ENCODE measurements at regions of chr7 and their contacts with region 1.

Region 1: GRCh38 chr7:108660460-108660859 is 90.8 kb downstream of the DNAJB9 start:
- DNase-seq: peak in 1 of 2 experiments; percentile 17
- H3K4me3 ChIP-seq: no peak overlapping the region
- H3K4me3 Mint-ChIP-seq: no peak overlapping the region
- H3K27ac Mint-ChIP-seq: no peak overlapping the region
- H3K4me1 ChIP-seq: no peaks in the 10 kb centered on the region
- H3K4me1 Mint-ChIP-seq: no peaks in the 10 kb centered on the region
- H3K27me3 ChIP-seq: no peaks in the 10 kb centered on the region
- H3K27me3 Mint-ChIP-seq: no peaks in the 10 kb centered on the region
- CTCF ChIP-seq: peak; percentile 27 to 58

Region 2: GRCh38 chr7:107948645-107949497 is 711.6 kb before region 1 on chr7:
- CTCF ChIA-PET with region 1: no interaction called
- POLR2A ChIA-PET with region 1: no interaction called
- intact Hi-C with region 1: no loop called
- DNase-seq: peak; percentile 49 to 59
- H3K4me3 ChIP-seq: no peak overlapping the region
- H3K4me3 Mint-ChIP-seq: peak overlapping the region; percentile 28
- H3K27ac Mint-ChIP-seq: peak overlapping the region; percentile 56
- H3K4me1 ChIP-seq: peaks cover 57% of the 10 kb centered on the region
- H3K4me1 Mint-ChIP-seq: peaks cover 61% of the 10 kb centered on the region
- H3K27me3 ChIP-seq: no peaks in the 10 kb centered on the region
- H3K27me3 Mint-ChIP-seq: no peaks in the 10 kb centered on the region
- CTCF ChIP-seq: no peak

Region 3: DNA sequence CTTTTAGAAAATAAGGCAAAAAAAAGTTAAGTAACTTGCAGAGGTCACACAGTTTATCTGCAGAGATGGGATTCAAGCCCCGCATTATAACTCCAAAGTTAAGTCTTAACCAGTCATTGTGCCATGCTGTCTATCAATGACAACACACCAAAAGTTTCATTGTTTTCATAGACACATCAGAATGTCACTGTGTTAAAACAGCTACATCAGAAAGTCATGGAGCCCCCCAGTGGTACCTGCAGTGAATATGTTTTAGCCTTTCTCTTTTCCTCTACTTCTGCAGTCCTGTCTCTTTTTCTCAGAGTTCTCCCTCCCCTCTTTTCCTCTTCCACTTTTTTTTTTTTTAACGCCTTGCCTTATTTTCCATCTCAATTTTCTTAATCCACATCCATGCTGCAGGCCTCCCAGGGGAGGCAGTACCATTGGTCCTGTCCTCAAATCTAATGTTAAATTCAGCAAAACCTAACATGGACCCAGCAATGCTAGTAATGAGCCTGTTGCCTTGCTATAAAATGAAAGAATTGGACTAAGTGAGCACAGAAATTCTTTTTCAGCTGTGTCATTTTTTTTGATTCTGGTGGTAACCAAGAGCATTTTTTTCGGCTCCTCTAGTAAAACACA is 200.4 kb before region 1 on chr7:
- CTCF ChIA-PET with region 1: no interaction called
- POLR2A ChIA-PET with region 1: no interaction called
- intact Hi-C with region 1: no loop called
- DNase-seq: peak in 1 of 2 experiments; percentile 68
- H3K4me3 ChIP-seq: no peak overlapping the region
- H3K4me3 Mint-ChIP-seq: no peak overlapping the region
- H3K27ac Mint-ChIP-seq: no peak overlapping the region
- H3K4me1 ChIP-seq: 0 out of 2 replicates have a peak, but pooled peaks cover 3% of the 10 kb centered on the region
- H3K4me1 Mint-ChIP-seq: peaks cover 17% of the 10 kb centered on the region
- H3K27me3 ChIP-seq: no peaks in the 10 kb centered on the region
- H3K27me3 Mint-ChIP-seq: no peaks in the 10 kb centered on the region
- CTCF ChIP-seq: peak; percentile 65 to 69

Region 4: DNA sequence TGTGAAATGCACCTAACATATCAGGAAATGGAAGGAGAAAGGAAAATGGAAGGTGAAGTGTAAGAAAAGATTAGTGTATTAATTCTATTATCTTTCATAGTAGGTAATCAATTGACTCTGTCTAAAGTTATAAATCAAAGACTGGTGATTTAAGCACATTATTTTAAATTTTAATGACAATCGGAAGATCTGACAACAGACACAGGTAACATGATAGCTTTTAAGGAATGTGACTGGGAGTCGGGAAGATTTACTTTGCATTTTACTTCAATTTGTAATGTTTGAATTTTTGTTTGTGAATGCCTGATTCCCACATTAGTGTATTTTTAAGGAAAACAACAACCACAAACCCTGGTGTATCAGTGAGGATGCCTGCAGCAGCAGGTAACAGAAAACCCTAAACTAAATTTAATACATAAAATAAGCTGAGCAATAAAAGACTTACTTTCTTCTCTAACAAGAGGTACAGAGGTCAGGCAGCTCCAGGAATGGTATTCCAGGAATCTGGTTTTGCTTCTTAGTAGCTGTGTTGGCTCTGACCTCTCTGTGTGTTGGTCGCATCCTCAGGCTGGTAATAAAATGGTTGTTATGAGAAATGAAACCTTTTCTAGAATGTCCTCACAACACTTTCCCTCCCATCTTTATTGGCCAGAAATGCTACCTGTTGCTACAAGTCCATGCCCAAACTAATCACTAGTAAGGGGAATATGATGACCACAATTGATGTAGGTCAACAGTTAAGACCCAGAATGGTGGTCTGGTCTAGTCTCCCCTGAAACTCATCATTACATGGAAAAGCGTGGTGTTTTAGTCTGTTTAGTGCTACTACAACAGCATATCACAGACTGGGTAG is 78.6 kb before region 1 on chr7:
- CTCF ChIA-PET with region 1: no interaction called
- POLR2A ChIA-PET with region 1: no interaction called
- intact Hi-C with region 1: no loop called
- DNase-seq: peak; percentile 82 to 89
- H3K4me3 ChIP-seq: no peak overlapping the region
- H3K4me3 Mint-ChIP-seq: peak overlapping the region; percentile 44
- H3K27ac Mint-ChIP-seq: peak overlapping the region; percentile 97
- H3K4me1 ChIP-seq: peaks cover 26% of the 10 kb centered on the region
- H3K4me1 Mint-ChIP-seq: peaks cover 36% of the 10 kb centered on the region
- H3K27me3 ChIP-seq: no peaks in the 10 kb centered on the region
- H3K27me3 Mint-ChIP-seq: no peaks in the 10 kb centered on the region
- CTCF ChIP-seq: no peak

Region 5: DNA sequence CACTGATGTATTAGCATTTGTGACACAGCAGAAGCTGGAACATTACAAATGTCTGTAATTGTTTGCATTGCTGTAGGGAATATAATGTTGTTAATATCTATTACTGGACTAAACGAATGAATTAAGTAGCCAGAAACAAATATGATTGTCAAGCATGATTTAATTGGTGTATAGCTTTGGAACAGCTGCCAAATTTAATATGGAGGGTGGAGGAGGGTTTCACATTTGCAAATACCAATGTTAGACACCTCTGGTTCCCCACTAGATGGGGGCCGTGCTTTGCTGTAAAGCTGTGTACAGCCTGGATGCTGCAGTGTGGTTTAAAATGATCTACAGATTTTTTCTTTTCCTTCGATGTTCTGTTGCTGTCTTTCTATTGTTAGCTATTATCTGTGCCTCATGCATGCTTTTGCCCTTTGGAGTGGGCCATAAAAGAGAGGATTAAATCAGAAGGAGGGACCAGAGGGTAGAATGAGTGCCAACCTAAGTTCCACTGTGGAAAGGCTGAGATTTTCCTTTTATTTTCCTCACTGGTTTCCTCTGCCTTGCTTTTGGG is 67.7 kb before region 1 on chr7:
- CTCF ChIA-PET with region 1: interaction called, 5 read pairs
- POLR2A ChIA-PET with region 1: no interaction called
- intact Hi-C with region 1: loop called (anchors 2 kb)
- DNase-seq: peak; percentile 61 to 69
- H3K4me3 ChIP-seq: no peak overlapping the region
- H3K4me3 Mint-ChIP-seq: no peak overlapping the region
- H3K27ac Mint-ChIP-seq: no peak overlapping the region
- H3K4me1 ChIP-seq: peaks cover 20% of the 10 kb centered on the region
- H3K4me1 Mint-ChIP-seq: peaks cover 19% of the 10 kb centered on the region
- H3K27me3 ChIP-seq: no peaks in the 10 kb centered on the region
- H3K27me3 Mint-ChIP-seq: no peaks in the 10 kb centered on the region
- CTCF ChIP-seq: peak; percentile 45 to 71

Region 6: DNA sequence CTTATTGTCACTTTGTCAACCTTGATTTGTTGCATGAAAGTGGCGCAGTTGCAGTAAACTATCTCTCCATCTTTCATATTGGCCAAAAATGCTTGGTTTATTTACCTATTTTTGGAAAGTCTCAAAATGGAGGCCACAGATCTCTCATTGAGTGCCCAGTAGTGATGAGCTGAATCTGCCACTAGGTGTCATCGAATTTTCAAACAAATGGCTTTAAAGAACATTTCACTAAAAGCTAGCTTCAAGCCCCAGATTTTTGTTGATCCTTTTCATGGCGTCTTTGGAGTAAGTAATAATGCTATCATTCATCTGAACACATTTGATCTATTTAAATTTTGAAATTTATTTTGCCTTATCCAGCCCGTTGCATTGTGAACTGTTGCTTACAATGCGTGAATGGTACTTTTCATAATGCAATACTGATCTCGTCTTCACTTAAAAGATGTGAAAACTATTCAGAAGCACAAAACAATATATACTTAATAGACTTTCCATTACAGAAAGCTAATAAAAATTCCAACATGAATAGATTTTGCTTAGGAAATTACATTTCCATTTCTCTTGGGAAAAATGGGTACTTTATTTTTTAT is 145.4 kb after region 1 on chr7:
- CTCF ChIA-PET with region 1: interaction called, 5 read pairs
- POLR2A ChIA-PET with region 1: no interaction called
- intact Hi-C with region 1: loop called (anchors 5 kb)
- DNase-seq: peak in 1 of 2 experiments; percentile 20
- H3K4me3 ChIP-seq: no peak overlapping the region
- H3K4me3 Mint-ChIP-seq: no peak overlapping the region
- H3K27ac Mint-ChIP-seq: no peak overlapping the region
- H3K4me1 ChIP-seq: no peaks in the 10 kb centered on the region
- H3K4me1 Mint-ChIP-seq: no peaks in the 10 kb centered on the region
- H3K27me3 ChIP-seq: no peaks in the 10 kb centered on the region
- H3K27me3 Mint-ChIP-seq: no peaks in the 10 kb centered on the region
- CTCF ChIP-seq: peak; percentile 50 to 63

Region 7: DNA sequence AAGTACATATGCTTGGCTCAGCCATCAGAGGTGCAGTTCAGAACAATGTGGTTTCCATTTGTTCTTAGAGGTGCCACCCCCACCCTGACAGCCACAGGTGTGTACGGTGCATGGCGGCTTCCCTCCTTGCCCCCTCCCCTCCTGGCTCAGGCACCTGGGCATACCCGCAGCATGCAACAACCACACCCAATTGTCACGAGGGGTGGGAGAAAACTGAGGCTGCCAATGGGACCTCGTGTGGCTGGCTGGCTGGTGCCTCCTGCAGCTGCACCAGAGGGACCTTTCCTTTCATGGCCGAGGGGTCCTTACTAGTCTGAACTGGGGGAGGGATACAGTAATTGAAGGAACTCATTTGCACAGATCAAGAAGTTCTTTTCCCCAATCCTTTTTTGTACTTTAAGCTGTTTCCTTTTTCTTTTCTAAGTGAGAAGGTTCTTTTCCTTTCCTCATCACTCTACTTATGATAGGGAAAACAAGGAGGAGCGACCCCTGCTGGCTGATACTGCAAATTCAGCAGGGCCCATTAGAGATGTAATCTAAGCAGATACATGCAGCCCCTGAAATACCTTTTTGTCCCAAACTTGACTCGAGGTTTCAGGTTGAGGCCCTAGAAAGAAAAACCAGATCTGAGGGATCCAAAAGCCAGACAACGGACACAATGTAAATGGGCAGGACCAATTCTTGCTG is 214.5 kb after region 1 on chr7:
- CTCF ChIA-PET with region 1: no interaction called
- POLR2A ChIA-PET with region 1: no interaction called
- intact Hi-C with region 1: loop called (anchors 10 kb)
- DNase-seq: peak in 1 of 2 experiments; percentile 17
- H3K4me3 ChIP-seq: no peak overlapping the region
- H3K4me3 Mint-ChIP-seq: no peak overlapping the region
- H3K27ac Mint-ChIP-seq: no peak overlapping the region
- H3K4me1 ChIP-seq: no peaks in the 10 kb centered on the region
- H3K4me1 Mint-ChIP-seq: no peaks in the 10 kb centered on the region
- H3K27me3 ChIP-seq: no peaks in the 10 kb centered on the region
- H3K27me3 Mint-ChIP-seq: no peaks in the 10 kb centered on the region
- CTCF ChIP-seq: no peak

Region 8: DNA sequence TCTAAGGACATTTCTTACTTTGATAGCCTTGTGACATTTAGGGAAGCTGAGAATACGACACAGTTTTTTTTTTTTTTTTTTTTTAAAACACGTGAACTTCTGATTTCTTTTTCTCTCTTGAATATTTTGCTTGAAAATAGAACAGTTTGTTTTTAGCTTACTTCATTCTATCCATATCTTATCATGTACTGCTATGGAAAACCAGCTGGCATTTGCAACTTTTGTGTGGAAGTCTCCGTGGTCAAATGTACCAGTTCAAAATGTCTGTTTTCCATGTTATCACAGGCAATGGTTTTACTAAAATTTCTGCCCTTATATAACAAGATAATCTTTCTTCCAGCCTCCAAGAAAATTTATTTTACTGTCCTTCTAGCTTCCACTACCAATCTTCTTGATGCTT is 730.8 kb after region 1 on chr7:
- CTCF ChIA-PET with region 1: no interaction called
- POLR2A ChIA-PET with region 1: no interaction called
- intact Hi-C with region 1: no loop called
- DNase-seq: no peak
- H3K4me3 ChIP-seq: no peak overlapping the region
- H3K4me3 Mint-ChIP-seq: no peak overlapping the region
- H3K27ac Mint-ChIP-seq: no peak overlapping the region
- H3K4me1 ChIP-seq: no peaks in the 10 kb centered on the region
- H3K4me1 Mint-ChIP-seq: no peaks in the 10 kb centered on the region
- H3K27me3 ChIP-seq: no peaks in the 10 kb centered on the region
- H3K27me3 Mint-ChIP-seq: no peaks in the 10 kb centered on the region
- CTCF ChIP-seq: no peak

Measured in Caco-2 (cell line).